ENCODE measurements at regions of chr1 and their contacts with region 1.

Region 1: DNA sequence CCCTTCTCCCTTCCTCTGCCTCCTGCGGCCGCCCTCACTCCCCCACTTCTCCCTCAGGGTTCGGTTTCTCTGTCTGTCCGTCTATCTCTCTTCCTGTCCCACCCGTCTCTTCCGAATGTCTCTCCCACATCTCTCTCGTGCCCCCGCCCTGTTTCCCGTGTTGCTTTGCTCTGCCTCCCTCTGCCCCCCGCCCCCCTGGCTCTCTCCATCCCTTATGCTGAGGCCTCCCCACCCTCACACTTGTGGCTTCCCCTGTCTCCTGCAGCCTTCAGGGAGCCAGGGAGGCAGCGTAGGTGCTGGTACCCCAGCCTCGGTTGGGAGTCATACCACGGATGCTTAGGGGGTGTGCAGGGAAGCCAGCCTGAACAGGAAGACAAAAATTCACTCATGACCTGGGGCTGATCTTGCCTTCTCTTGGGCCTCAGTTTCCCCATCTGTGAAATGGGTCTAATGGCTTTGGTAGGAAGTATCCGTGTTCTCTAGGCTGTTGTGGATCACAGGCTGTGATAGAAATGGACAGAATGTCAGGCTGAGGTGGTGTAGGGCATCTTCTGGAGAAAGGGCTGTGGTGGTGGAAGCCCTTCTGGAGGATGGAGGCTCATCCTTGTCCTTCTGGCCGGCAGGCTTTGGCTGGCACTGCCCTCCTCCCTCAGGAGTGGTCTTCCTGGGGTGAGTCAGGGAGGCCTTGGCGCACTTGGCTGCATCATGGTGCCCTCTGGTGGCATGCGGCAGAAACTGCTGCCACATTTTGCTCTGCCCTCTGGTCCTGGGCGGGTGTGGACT is 55.5 kb downstream of the FOXO6 start:
- DNase-seq: peak; percentile 80
- ATAC-seq: peak; percentile 83
- H3K4me3 ChIP-seq: no peak overlapping the region
- H3K27ac ChIP-seq: no peak overlapping the region
- H3K4me1 ChIP-seq: peaks cover 11% of the 10 kb centered on the region
- H3K27me3 ChIP-seq: no peaks in the 10 kb centered on the region
- CTCF ChIP-seq: peak; percentile 94

Region 2: DNA sequence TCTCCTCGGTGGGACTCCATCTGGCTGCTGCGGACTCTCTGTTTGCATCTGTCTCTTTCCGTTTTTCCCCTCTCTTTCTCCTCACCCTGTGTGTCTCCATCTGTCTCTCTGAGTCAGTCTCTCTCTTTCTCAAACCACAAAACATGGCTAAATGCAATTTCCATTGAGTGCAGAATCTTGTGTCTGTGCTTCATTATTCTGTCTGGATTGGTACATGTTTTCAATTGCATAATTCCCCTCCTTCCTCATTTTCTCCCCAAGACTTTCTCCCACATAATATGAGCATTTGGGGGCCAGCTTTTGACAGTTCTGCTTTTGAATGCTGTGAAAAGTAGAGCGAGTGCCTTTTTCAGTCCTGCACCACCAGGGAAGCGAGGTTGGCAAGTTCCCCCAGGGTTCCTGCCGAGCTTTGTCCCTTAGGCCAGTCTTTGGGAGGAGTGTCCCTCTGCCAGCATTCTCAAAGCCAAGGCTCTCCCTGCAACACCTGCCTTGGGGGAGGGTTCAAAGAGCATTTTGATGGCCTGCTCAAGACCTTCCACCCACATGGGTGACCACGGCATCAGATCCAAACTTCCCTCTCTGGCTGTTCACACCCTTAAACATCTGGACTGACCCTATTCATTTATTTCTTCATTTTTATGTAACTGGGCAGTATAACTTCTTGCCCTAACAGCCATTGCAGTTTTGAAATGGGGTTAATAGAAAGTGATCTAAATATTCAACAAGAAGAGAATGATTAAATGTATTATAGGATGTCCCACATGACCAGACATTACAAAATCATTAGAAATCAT is 141.8 kb before region 1 on chr1:
- intact Hi-C with region 1: loop called (anchors 5 kb)
- DNase-seq: no peak
- ATAC-seq: peak; percentile 80
- H3K4me3 ChIP-seq: no peak overlapping the region
- H3K27ac ChIP-seq: no peak overlapping the region
- H3K4me1 ChIP-seq: no peaks in the 10 kb centered on the region
- H3K27me3 ChIP-seq: peaks cover 13% of the 10 kb centered on the region
- CTCF ChIP-seq: no peak

Region 3: DNA sequence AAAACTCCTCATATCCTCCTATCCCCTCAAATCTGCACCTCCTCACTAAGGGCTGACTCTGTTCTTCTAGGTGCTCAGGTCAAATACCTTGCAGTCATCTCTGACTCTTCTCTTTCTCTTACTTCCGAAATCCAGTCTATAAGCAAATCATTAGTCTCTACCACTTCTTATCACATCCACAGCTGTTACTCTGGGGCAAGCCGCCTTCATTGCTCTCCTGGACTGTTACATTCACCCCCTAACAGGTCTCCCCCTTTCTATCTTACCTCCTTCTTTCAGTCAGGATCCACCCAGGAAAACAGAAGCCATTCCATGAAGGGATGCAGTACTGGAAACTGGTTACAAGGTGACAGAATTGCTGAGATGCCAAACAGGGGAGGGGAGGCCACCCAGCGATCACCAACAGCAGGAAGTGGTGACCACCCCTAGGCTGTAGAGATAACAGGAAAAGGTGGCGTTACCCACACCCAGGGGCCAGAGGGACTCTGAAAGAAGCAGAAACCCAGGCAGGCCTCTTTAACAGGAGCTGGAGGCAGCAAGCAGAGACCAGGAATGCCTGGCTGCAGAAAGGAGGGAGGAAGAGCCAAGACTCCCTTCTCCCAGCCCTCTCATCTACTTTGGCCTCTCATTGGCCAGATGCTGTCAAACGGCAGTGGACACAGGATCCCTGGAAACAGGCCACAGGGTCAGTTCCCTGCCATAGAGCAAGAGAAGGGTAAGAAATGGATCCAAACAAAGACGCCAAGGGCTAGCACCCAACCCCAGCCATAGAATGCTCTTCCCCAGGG is 111.0 kb before region 1 on chr1:
- intact Hi-C with region 1: no loop called
- DNase-seq: no peak
- ATAC-seq: no peak
- H3K4me3 ChIP-seq: no peak overlapping the region
- H3K27ac ChIP-seq: no peak overlapping the region
- H3K4me1 ChIP-seq: no peaks in the 10 kb centered on the region
- H3K27me3 ChIP-seq: peaks cover 11% of the 10 kb centered on the region
- CTCF ChIP-seq: no peak

Region 4: GRCh38 chr1:41322835-41323627 is 93.7 kb before region 1 on chr1:
- intact Hi-C with region 1: loop called (anchors 10 kb)
- DNase-seq: no peak
- ATAC-seq: peak; percentile 77
- H3K4me3 ChIP-seq: no peak overlapping the region
- H3K27ac ChIP-seq: no peak overlapping the region
- H3K4me1 ChIP-seq: no peaks in the 10 kb centered on the region
- H3K27me3 ChIP-seq: no peaks in the 10 kb centered on the region
- CTCF ChIP-seq: peak; percentile 43

Region 5: DNA sequence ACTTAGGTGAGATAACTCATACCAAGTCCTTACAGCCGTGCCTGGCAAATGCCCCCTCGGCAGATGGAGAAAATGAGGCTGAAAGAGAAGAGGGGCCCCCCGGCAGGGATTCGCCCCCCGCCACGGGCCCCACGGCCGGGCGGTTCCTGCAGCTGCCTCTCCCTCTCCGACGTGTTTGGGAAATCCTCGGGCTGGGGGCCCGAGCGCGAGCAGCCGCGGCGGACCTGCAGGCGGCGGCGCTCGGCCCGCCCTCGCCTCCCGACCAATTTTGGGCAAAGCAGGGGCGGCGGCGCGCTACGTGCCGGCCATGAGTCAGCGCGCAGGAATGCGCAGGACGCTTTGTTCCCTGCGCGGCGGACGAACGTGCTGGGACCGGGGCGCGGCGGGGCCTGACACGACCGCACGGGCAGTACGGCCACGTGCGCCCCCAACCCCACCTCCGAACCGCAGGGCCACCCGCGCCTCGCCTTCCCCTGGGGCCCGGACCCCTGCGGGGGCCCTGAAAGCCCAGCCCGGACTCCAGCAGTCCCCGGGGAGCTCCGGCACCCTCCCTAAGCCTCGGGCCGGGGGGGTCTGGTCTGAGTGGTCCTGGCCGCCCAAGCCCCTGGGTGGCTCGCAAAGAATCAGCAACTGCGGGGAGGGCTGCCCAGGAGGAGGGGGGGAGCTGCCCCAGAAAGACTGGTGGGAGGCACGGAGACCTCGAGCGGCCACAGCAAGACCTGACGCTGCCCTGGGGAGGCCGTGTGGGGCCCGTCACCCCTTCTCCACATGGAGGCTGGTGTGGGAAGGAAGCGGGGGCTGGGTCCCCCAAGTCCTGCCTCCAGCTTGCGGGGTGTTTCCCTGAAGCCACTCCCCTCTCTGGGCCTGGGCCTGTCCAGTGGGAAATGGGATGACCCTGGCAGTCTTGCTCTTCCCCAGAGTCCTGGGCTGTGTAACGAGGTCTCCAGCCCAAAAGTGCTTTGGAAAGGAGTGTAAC is 79.6 kb after region 1 on chr1:
- intact Hi-C with region 1: no loop called
- DNase-seq: peak; percentile 94
- ATAC-seq: peak; percentile 76
- H3K4me3 ChIP-seq: peak overlapping the region; percentile 36
- H3K27ac ChIP-seq: peak overlapping the region; percentile 80
- H3K4me1 ChIP-seq: peaks cover 47% of the 10 kb centered on the region
- H3K27me3 ChIP-seq: no peaks in the 10 kb centered on the region
- CTCF ChIP-seq: peak; percentile 11

Region 6: DNA sequence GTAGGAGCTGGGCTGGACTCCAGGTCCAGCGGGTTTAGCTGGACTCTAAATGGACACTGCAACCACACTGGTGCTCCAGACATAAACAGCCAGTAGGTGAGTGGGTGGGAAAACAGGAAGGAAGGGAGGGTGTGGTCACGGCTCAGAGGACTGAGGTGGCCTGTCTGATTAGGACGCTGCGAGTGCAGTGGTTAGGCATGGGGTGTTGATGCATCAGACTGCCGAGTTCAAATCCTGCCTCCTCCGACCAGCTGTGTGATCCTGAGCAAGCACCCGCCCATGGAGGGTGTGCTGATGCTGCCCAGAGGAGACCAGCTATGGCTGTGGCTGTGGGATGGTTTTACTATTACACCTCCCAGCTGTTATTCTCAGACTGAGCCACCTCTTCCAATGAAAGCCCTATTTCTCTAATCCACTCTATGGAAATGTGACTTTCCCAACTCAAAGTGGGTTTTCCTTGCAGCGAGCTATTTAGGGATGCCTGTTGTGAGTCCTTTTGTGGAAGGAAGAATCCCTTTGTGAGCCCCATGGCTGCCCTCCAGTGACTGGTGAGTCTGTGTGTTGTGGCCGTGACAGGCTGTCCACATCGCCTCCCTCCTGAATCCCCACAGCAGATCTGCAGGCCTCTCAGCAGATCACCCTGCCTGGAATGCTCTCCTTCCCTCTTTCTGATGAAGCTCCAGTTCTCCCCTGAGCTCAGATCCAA is 124.3 kb after region 1 on chr1:
- intact Hi-C with region 1: no loop called
- DNase-seq: peak; percentile 67
- ATAC-seq: peak; percentile 81
- H3K4me3 ChIP-seq: no peak overlapping the region
- H3K27ac ChIP-seq: no peak overlapping the region
- H3K4me1 ChIP-seq: peaks cover 13% of the 10 kb centered on the region
- H3K27me3 ChIP-seq: no peaks in the 10 kb centered on the region
- CTCF ChIP-seq: no peak

Region 7: GRCh38 chr1:41683681-41684500 is 267.1 kb after region 1 on chr1:
- intact Hi-C with region 1: no loop called
- DNase-seq: peak; percentile 63
- ATAC-seq: peak; percentile 65
- H3K4me3 ChIP-seq: no peak overlapping the region
- H3K27ac ChIP-seq: no peak overlapping the region
- H3K4me1 ChIP-seq: peaks cover 15% of the 10 kb centered on the region
- H3K27me3 ChIP-seq: no peaks in the 10 kb centered on the region
- CTCF ChIP-seq: no peak